Naive thymus-derived CD8-positive, alpha-beta T cell (primary cell): ENCODE measurements at regions of chr6 and their contacts with region 1.

Region 1: DNA sequence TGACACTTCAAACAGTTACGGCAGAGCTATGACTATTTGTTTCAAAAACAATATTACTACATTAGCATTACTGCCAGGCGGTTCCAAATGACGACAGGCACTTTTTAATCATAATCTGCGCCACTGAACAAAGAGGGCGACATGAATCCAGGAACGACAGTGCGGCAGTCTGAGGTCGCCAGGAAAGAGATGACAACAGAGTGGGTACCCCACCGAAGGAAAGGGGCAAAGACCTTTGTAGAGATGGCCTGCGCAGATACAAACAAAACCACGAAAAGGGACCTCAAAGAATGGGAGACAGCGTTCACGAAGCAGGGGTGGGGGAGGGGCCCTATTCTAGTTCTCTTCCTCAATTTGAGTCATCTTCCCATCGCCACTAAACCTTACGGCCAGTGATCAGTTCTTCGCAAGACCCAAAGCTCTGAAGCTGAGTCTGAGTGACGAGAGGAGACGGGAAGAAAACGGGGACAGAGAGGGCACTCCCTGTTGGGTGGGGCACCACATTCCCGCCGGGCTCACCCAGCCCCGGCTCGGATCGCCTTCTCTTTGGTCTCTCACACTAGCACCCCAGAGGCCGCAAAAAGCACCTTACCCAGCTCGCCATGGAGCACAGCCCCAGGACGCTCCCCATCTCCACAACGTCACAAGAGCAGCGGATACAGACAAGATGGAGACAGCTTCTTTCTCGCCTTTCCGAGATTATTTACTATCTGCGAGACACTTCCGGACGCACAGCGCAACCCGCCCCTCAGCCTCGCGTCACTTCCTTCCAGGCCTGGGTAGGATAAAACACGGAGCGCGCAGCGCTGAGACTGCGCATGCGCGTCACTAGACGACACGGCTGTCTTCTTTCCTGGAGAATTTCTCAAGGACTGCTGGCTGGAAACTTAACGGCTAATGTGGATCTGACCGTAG is at the start of gene SERINC1:
- DNase-seq: peak; percentile 78 to 97 (median 92)
- ATAC-seq: peak; percentile 92
- H3K4me3 Mint-ChIP-seq: peak within 1 kb of the TSS; percentile 97 to 100 (median 99)
- H3K27ac Mint-ChIP-seq: peak within 1 kb of the TSS; percentile 99 to 100 (median 100)
- H3K4me1 Mint-ChIP-seq: peaks cover 14 to 47% (median 41%) of the 10 kb centered on the region in 4 donors
- H3K27me3 Mint-ChIP-seq: peaks cover 0 to 3% (median 0%) of the 10 kb centered on the region in 5 donors
- polyA plus RNA-seq, gene SERINC1: 94.8 to 102 (median 101) TPM

Region 2: GRCh38 chr6:122399384-122400158 is 71.8 kb before region 1 on chr6 and contains the start of gene HSF2:
- POLR2A ChIA-PET with region 1: interaction called, 18 read pairs
- DNase-seq: peak; percentile 81 to 97 (median 93)
- ATAC-seq: peak; percentile 96 to 97
- H3K4me3 Mint-ChIP-seq: peak within 1 kb of the TSS; percentile 94 to 100 (median 98)
- H3K27ac Mint-ChIP-seq: peak within 1 kb of the TSS; percentile 84 to 99 (median 97)
- H3K4me1 Mint-ChIP-seq: peaks cover 18 to 49% (median 36%) of the 10 kb centered on the region in 4 donors
- H3K27me3 Mint-ChIP-seq: no peaks in the 10 kb centered on the region
- polyA plus RNA-seq, gene HSF2: 17.9 to 32.6 (median 22.7) TPM

Region 3: DNA sequence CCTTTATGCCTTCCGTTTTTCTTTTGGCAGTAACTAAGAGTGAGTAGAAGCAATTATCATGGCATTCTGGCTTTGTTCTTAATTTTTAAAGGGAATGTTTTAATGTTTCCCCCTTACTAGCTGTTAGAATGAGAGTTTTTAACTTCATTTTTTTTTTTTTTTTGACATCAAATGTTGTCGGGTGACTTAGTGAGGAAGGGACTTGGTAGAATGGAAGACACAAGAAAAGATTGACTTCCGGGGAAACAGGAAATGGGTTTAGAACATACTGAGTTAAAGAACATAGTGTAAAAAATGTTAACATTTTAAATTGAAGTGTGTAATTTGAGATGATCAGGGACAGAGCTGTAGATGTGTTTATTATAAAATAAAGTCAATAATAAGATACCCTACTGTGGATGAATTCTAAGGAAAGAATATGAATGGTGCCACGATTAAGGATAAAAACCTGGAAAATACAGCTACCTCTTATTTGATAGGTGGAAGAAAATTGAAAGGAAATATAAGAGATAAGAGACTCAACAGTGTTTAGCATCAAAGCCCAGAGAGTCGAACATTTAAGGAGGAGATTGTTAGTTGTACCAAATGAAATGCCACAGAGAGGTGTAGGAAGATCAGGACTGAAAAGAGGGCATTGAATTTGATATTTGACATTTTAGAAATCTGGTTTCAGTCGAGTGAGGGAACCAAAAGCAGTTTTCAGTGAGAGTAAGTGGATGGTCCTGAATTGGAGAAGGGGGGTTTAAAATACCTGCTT is 62.5 kb before region 1 on chr6:
- POLR2A ChIA-PET with region 1: interaction called, 11 read pairs
- DNase-seq: peak in 4 of 10 donors; percentile 8 to 71 (median 64)
- ATAC-seq: peak; percentile 91 to 94
- H3K4me3 Mint-ChIP-seq: peak overlapping the region; percentile 67 to 90 (median 82)
- H3K27ac Mint-ChIP-seq: peak overlapping the region; percentile 84 to 99 (median 93)
- H3K4me1 Mint-ChIP-seq: peaks cover 31 to 83% (median 80%) of the 10 kb centered on the region in 4 donors
- H3K27me3 Mint-ChIP-seq: no peaks in the 10 kb centered on the region

Region 4: DNA sequence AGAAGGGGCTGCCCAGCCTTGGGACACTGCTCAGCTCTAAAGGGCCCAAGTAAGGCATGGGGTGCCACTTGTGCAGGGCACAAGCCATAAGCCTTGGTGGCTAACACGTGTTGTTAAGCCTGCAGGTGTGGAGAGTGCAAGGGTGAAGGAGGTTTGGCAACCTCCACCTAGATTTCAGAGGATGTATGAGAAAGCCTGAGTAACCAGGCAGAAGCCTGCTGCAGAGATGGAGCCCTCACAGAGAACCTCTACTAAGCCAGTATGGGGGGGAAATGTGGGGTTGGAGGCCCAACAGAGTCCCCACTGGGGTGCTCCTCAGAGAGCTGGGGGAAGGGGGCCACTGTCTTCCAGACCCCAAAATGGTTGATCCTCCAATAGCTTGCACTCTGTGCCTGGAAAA is 32.4 kb before region 1 on chr6:
- POLR2A ChIA-PET with region 1: no interaction called
- DNase-seq: no peak
- ATAC-seq: peak in 1 of 2 donors; percentile 29
- H3K4me3 Mint-ChIP-seq: peak overlapping the region in 1 of 10 donors; percentile 26
- H3K27ac Mint-ChIP-seq: peak overlapping the region in 2 of 10 donors; percentile 75 to 85
- H3K4me1 Mint-ChIP-seq: peaks cover 0 to 9% (median 3%) of the 10 kb centered on the region in 4 donors
- H3K27me3 Mint-ChIP-seq: no peaks in the 10 kb centered on the region